ENCODE measurements at regions of chr6 and their contacts with region 1.

Region 1: GRCh38 chr6:72411872-72412708 is 209.8 kb upstream of the KCNQ5 start:
- DNase-seq: peak; percentile 20
- H3K4me3 ChIP-seq: no peak overlapping the region
- H3K27me3 ChIP-seq: no peaks in the 10 kb centered on the region
- CTCF ChIP-seq: peak; percentile 100

Region 2: DNA sequence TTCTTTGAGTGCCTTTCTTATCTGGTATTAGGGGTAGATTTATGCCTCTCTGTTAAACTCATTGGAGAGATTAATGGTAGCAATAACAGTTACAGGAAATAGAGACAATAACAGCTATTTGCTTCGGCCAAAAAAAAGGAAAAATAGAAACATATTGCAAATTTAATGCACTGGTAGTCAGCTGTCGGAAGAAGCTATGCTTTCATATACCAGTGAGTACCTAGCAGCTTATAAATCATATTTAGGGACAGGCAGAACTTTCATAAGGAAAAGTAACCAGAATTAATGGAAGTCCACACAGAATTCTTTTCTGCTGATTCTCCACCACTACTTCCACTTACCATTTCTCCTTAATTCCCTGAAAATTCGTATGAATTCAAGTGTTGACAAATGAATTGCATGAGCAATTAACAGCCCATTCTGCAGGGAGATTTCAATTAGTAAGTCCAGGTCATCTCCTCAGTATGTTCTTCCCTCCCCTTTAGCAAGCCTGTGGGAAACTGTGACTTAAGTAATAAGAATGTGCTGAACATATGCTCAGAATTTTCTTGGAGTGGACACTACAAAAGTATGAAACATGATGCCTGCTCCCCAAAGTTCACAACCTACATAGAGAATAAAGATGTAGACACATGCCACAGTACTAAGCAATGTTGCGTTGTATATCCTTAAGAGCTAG is 13.1 kb after region 1 on chr6:
- CTCF ChIA-PET with region 1: interaction called, 37 read pairs
- POLR2A ChIA-PET with region 1: no interaction called
- DNase-seq: peak; percentile 94
- H3K4me3 ChIP-seq: no peak overlapping the region
- H3K27me3 ChIP-seq: no peaks in the 10 kb centered on the region
- CTCF ChIP-seq: no peak

Region 3: GRCh38 chr6:72580281-72580940 is 168.3 kb after region 1 on chr6:
- CTCF ChIA-PET with region 1: interaction called, 179 read pairs
- POLR2A ChIA-PET with region 1: interaction called, 5 read pairs
- DNase-seq: peak; percentile 63
- H3K4me3 ChIP-seq: no peak overlapping the region
- H3K27me3 ChIP-seq: no peaks in the 10 kb centered on the region
- CTCF ChIP-seq: peak; percentile 78

Region 4: DNA sequence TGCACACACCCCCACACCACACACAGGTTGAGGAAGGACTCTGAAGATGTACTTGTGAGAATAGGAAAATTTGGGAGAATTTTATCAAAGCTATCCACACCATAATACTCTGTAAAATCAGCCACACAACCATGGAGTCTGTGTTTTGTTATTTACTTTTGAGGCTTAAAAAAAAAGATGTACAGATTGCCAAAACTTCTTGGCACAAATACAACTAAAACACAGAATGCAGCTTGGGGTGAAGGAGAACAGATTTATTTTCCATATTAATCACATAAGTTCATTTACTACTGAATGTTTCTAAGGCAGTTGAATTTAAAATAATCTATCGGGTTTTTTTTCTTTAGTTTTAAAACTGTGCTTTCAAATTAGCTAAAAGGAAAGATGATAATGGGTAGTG is 177.0 kb after region 1 on chr6:
- CTCF ChIA-PET with region 1: interaction called, 179 read pairs
- POLR2A ChIA-PET with region 1: no interaction called
- DNase-seq: no peak
- H3K4me3 ChIP-seq: no peak overlapping the region
- H3K27me3 ChIP-seq: no peaks in the 10 kb centered on the region
- CTCF ChIP-seq: no peak

Region 5: GRCh38 chr6:72622094-72622940 is 210.2 kb after region 1 on chr6:
- CTCF ChIA-PET with region 1: interaction called, 27 read pairs
- POLR2A ChIA-PET with region 1: no interaction called
- DNase-seq: no peak
- H3K4me3 ChIP-seq: peak overlapping the region; percentile 66
- H3K27me3 ChIP-seq: no peaks in the 10 kb centered on the region
- CTCF ChIP-seq: peak; percentile 34; the same call in 1 of the 2 replicates